Activated CD4-positive, alpha-beta T cell treated with anti-CD3 and anti-CD28 coated beads for 36 hours (primary cell): ENCODE measurements at regions of chr5 and their contacts with region 1.

Region 1: DNA sequence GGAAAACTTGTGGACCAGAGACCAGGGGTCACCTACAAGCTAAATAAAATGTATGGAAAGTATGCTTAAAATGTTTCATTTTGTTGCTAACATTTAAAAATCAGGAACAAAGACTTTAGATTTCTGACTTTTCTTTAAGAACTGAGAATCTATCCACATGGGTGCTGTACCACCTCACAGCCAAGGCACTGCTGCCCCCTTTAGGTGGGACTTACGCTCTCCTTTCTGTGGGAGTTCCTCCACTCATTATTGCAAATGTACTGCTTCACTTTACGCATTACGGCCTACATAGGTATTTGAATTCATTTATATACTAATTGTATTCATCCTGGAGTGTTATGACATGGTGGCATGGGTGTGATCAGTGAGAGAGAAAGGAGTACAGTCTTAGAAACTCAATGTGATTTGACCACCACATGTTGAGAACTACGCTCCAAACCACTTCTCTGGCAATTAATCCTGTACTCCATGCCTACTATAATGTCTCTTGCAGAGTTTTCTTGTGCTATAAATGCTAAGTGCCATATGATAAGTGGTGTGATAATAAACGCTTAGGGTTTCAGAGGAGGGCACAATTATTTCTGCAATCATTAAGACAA is 24.7 kb upstream of the CETN3 start:
- DNase-seq: peak; percentile 71
- ATAC-seq: peak; percentile 63
- H3K4me3 Mint-ChIP-seq: no peak overlapping the region
- H3K27ac Mint-ChIP-seq: no peak overlapping the region
- H3K4me1 Mint-ChIP-seq: no peaks in the 10 kb centered on the region
- H3K27me3 Mint-ChIP-seq: peaks cover 3% of the 10 kb centered on the region

Region 2: DNA sequence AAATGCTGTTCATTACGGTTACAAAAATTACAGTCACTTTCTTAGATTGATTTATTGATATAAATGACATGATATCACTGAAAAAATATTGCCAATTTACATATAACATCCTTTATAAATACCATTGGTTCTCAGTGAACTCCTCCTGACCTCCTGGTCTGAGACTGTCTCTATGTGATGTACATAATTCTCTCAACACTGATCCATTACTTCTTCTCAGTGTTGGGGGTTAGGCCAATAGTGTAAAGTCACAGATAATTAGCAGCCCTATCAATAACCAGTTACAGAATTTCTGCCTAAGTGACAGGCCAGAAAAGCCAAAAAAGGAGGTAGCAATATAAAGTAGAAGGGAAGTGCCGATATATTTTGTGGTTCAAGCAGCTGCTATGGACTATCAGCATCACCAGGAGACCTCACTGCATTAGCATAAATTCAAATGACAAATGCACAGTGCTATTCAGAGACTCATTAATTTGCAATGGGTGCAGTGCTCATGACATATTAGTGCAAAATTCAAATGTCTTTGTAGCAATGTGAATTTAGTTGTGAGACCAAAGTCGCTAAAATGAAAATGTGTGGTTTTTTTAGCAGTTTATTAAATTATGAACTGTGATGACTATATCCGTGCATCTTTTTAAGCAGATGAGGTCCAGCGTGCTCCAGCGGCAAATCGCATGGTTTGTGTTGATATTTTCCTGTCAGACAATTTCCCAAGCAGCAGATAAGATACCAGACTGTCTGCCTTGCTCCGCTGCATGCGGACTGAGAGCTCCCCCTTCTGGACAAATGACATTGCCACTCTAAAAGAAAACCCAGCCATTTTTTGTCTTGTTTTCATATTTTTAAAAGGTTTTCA is 169.3 kb before region 1 on chr5:
- CTCF ChIA-PET with region 1: interaction called, 3 read pairs
- POLR2A ChIA-PET with region 1: no interaction called
- intact Hi-C with region 1: loop called in 1 of 2 experiments (anchors 1 kb)
- DNase-seq: peak; percentile 72
- ATAC-seq: peak; percentile 53
- H3K4me3 Mint-ChIP-seq: no peak overlapping the region
- H3K27ac Mint-ChIP-seq: no peak overlapping the region
- H3K4me1 Mint-ChIP-seq: no peaks in the 10 kb centered on the region
- H3K27me3 Mint-ChIP-seq: peaks cover 8% of the 10 kb centered on the region

Region 3: GRCh38 chr5:90334741-90335140 is 99.5 kb before region 1 on chr5:
- CTCF ChIA-PET with region 1: no interaction called
- POLR2A ChIA-PET with region 1: no interaction called
- intact Hi-C with region 1: no loop called
- DNase-seq: no peak
- ATAC-seq: no peak
- H3K4me3 Mint-ChIP-seq: no peak overlapping the region
- H3K27ac Mint-ChIP-seq: no peak overlapping the region
- H3K4me1 Mint-ChIP-seq: peaks cover 4% of the 10 kb centered on the region
- H3K27me3 Mint-ChIP-seq: peaks cover 9% of the 10 kb centered on the region

Region 4: DNA sequence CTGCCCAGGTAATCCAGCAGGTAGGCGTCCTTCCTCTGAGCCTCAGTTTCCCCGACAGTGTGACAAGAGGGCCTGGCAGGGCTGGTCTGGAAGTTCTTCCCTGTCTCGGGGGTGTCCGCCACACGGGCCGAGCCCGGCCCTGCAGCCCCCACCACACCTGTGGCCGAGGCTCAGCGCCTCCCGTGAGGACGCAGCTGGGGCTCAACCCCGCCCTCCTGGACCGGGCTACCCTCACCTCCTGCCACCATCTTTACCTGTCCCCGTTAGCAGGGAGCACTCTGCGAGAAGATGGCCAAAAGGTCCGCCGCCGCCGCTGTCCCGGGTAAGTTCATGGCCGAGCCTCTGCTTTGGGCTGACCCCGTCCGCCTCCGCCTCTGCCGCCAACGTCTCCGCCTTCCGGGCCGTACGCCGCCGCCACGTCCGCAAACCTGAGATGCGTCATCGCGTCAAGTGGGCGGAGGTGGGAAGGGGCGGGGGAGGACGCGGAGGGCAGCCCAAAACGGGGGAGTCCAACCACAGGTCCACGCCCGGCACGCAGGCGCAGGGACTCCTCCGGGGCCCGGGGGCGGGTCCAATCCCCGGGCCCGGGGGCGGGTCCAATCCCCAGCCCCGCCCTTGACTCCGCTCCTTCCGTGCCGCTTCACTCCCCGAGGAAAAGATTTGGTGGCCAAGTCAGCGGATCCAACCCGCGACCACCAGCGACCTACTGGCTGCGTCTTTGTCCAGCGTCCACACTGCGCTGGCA is 95.2 kb after region 1 on chr5 and contains the start of gene LYSMD3:
- CTCF ChIA-PET with region 1: interaction called, 18 read pairs
- POLR2A ChIA-PET with region 1: no interaction called
- intact Hi-C with region 1: loop called (anchors 1 kb)
- DNase-seq: peak; percentile 97
- ATAC-seq: peak; percentile 94
- H3K4me3 Mint-ChIP-seq: peak within 1 kb of the TSS; percentile 85
- H3K27ac Mint-ChIP-seq: peak within 1 kb of the TSS; percentile 95
- H3K4me1 Mint-ChIP-seq: peaks cover 27% of the 10 kb centered on the region
- H3K27me3 Mint-ChIP-seq: peaks cover 7% of the 10 kb centered on the region
- total RNA-seq, gene LYSMD3: 11.6 to 12.5 TPM

Region 5: DNA sequence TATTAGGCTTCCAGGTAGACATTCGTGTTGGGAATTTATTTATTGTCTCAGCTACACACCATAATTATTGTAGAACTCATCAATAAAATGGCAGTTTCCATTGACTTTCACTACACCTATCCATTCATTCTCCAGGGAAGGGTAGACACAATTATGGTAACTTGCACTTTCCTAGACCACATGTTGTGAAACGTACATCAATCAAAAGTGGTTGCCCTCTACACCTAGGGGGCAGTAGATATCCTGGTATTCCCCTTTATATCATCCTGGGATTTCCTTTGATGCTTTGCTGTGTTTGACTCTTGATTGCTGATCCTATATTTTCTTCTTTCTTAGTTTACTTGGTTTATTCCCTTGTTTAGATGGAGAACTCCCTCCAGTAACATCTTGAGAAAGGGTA is 172.3 kb after region 1 on chr5:
- CTCF ChIA-PET with region 1: interaction called, 3 read pairs
- POLR2A ChIA-PET with region 1: no interaction called
- intact Hi-C with region 1: loop called in 1 of 2 experiments (anchors 5 kb)
- DNase-seq: no peak
- ATAC-seq: no peak
- H3K4me3 Mint-ChIP-seq: no peak overlapping the region
- H3K27ac Mint-ChIP-seq: no peak overlapping the region
- H3K4me1 Mint-ChIP-seq: no peaks in the 10 kb centered on the region
- H3K27me3 Mint-ChIP-seq: peaks cover 17% of the 10 kb centered on the region

Region 6: DNA sequence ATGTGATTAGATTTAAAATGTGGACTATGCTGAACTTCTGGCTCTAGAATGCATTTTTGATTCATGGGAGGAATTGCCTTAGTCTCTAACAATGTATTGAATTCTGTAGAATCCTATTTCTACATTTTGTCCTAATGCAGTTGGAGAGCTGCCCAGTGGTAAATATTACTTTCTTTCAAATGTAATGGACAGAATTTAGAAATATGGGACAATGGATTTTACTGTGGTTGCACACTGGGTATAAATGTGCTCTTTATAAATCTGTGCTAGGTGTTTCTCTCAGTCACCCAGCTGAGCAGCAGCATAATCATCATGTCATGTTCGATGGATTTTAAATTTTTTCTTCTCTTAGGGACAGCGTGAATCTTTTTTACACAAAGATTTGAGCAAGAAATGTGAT is 266.1 kb after region 1 on chr5:
- CTCF ChIA-PET with region 1: no interaction called
- POLR2A ChIA-PET with region 1: no interaction called
- intact Hi-C with region 1: no loop called
- DNase-seq: no peak
- ATAC-seq: no peak
- H3K4me3 Mint-ChIP-seq: no peak overlapping the region
- H3K27ac Mint-ChIP-seq: no peak overlapping the region
- H3K4me1 Mint-ChIP-seq: no peaks in the 10 kb centered on the region
- H3K27me3 Mint-ChIP-seq: peaks cover 13% of the 10 kb centered on the region